Natural killer cell (primary cell): ENCODE measurements at regions of chr12 and their contacts with region 1.

Region 1: GRCh38 chr12:12916135-12916944 is 25.0 kb downstream of the GPRC5A start:
- DNase-seq: peak; percentile 76 to 90
- ATAC-seq: peak; percentile 95 to 100 (median 99)
- H3K4me3 ChIP-seq: no peak overlapping the region
- H3K4me3 Mint-ChIP-seq: peak overlapping the region; percentile 3
- H3K27ac ChIP-seq: no peak overlapping the region
- H3K27ac Mint-ChIP-seq: no peak overlapping the region
- H3K4me1 ChIP-seq: peaks cover 5% of the 10 kb centered on the region
- H3K4me1 Mint-ChIP-seq: peaks cover 7 to 10% of the 10 kb centered on the region in 2 donors
- H3K27me3 ChIP-seq: no peaks in the 10 kb centered on the region
- H3K27me3 Mint-ChIP-seq: peaks cover 15 to 26% of the 10 kb centered on the region in 2 donors
- CTCF ChIP-seq: peak; percentile 95

Region 2: DNA sequence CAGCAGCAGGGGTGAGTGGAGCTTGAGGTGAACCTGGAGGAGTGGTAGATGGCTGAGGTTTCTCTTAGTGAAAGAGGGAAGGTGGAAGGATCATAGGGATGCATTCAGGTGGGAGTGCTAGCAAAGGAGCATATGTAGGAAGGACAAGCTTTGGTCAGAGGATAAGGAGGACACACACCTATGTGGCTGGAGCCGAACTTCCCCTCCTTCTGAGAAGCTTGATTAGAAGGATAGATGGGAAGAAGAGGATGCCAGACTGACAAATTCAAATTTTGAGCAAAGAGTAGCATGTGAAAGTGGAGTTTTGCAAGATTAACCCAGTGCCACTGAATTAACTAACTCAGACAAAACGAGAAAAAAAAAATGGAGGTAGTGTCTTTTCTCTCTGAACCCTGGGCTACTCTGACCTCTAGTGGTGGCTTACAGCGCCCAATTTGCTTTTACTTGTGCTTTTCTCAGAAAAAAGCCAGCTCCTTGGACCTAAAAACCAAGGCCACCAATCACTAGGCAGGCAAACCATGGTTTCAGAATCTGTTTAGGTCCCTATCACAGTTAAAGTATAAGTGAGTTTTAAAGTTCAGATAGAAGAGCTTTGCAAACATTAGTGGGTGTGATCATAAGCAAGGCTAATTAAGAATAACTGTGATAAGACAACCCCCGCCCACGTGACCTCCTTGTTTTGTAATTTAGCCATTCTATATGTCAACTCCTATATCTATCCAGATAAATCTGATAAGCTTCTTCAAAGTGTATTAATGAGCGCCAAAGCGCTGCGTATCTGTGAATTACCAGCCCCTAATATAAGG is 295.7 kb after region 1 on chr12:
- intact Hi-C with region 1: loop called (anchors 1 kb)
- DNase-seq: peak; percentile 52 to 88
- ATAC-seq: peak; percentile 72 to 93 (median 80)
- H3K4me3 ChIP-seq: no peak overlapping the region
- H3K4me3 Mint-ChIP-seq: no peak overlapping the region
- H3K27ac ChIP-seq: no peak overlapping the region
- H3K27ac Mint-ChIP-seq: peak overlapping the region in 1 of 2 donors; percentile 6
- H3K4me1 ChIP-seq: peaks cover 3% of the 10 kb centered on the region
- H3K4me1 Mint-ChIP-seq: peaks cover 0 to 7% of the 10 kb centered on the region in 2 donors
- H3K27me3 ChIP-seq: no peaks in the 10 kb centered on the region
- H3K27me3 Mint-ChIP-seq: peaks cover 7 to 9% of the 10 kb centered on the region in 2 donors
- CTCF ChIP-seq: peak; percentile 82

Region 3: GRCh38 chr12:13223179-13223859 is 307.0 kb after region 1 on chr12:
- intact Hi-C with region 1: no loop called
- DNase-seq: no peak
- ATAC-seq: no peak
- H3K4me3 ChIP-seq: no peak overlapping the region
- H3K4me3 Mint-ChIP-seq: no peak overlapping the region
- H3K27ac ChIP-seq: no peak overlapping the region
- H3K27ac Mint-ChIP-seq: no peak overlapping the region
- H3K4me1 ChIP-seq: no peaks in the 10 kb centered on the region
- H3K4me1 Mint-ChIP-seq: no peaks in the 10 kb centered on the region
- H3K27me3 ChIP-seq: no peaks in the 10 kb centered on the region
- H3K27me3 Mint-ChIP-seq: peaks cover 24 to 43% of the 10 kb centered on the region in 2 donors
- CTCF ChIP-seq: no peak

Region 4: GRCh38 chr12:13233830-13234641 is 317.7 kb after region 1 on chr12:
- intact Hi-C with region 1: loop called (anchors 1 kb)
- DNase-seq: peak in 1 of 2 donors; percentile 62
- ATAC-seq: peak in 2 of 3 donors; percentile 50 to 62
- H3K4me3 ChIP-seq: no peak overlapping the region
- H3K4me3 Mint-ChIP-seq: no peak overlapping the region
- H3K27ac ChIP-seq: no peak overlapping the region
- H3K27ac Mint-ChIP-seq: no peak overlapping the region
- H3K4me1 ChIP-seq: no peaks in the 10 kb centered on the region
- H3K4me1 Mint-ChIP-seq: no peaks in the 10 kb centered on the region
- H3K27me3 ChIP-seq: no peaks in the 10 kb centered on the region
- H3K27me3 Mint-ChIP-seq: peaks cover 8 to 12% of the 10 kb centered on the region in 2 donors
- CTCF ChIP-seq: peak; percentile 61